Calu3 (cell line): ENCODE measurements at regions of chr1 and their contacts with region 1.

Region 1: GRCh38 chr1:76154206-76154956 is 79.8 kb downstream of the ST6GALNAC3 start:
- DNase-seq: peak; percentile 81
- H3K4me3 Mint-ChIP-seq: peak overlapping the region; percentile 72
- H3K27ac Mint-ChIP-seq: peak overlapping the region; percentile 57
- H3K4me1 Mint-ChIP-seq: peaks cover 10% of the 10 kb centered on the region
- H3K27me3 Mint-ChIP-seq: no peaks in the 10 kb centered on the region
- CTCF ChIP-seq: peak; percentile 90

Region 2: GRCh38 chr1:75991497-75992114 is 162.8 kb before region 1 on chr1:
- CTCF ChIA-PET with region 1: no interaction called
- intact Hi-C with region 1: loop called (anchors 5 kb)
- DNase-seq: peak; percentile 89
- H3K4me3 Mint-ChIP-seq: no peak overlapping the region
- H3K27ac Mint-ChIP-seq: no peak overlapping the region
- H3K4me1 Mint-ChIP-seq: no peaks in the 10 kb centered on the region
- H3K27me3 Mint-ChIP-seq: peaks cover 12% of the 10 kb centered on the region
- CTCF ChIP-seq: peak; percentile 57

Region 3: GRCh38 chr1:76330991-76331603 is 176.7 kb after region 1 on chr1:
- CTCF ChIA-PET with region 1: interaction called, 3 read pairs
- intact Hi-C with region 1: loop called (anchors 1 kb)
- DNase-seq: peak; percentile 32
- H3K4me3 Mint-ChIP-seq: no peak overlapping the region
- H3K27ac Mint-ChIP-seq: no peak overlapping the region
- H3K4me1 Mint-ChIP-seq: no peaks in the 10 kb centered on the region
- H3K27me3 Mint-ChIP-seq: no peaks in the 10 kb centered on the region
- CTCF ChIP-seq: peak; percentile 70

Region 4: DNA sequence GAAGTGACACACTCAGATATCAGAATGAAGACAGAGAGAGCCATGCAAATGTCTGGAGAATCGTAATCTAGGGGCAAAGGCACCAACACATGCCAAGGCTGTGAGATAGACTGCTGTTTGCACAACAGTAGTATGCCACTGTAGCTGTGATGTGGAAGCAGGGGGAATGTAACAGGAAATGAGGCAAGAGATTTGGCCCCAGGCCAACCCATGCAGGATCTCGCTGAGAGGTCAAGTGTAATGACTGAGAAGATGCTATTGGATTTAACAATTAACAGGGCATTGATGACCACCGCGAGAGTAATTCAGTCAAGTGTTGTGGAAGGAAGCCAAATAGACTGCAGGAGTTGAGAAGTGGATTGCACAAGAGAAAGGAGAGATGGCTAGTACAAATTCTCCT is 605.6 kb after region 1 on chr1:
- CTCF ChIA-PET with region 1: no interaction called
- intact Hi-C with region 1: loop called (anchors 10 kb)
- DNase-seq: peak; percentile 33
- H3K4me3 Mint-ChIP-seq: no peak overlapping the region
- H3K27ac Mint-ChIP-seq: no peak overlapping the region
- H3K4me1 Mint-ChIP-seq: no peaks in the 10 kb centered on the region
- H3K27me3 Mint-ChIP-seq: peaks cover 2% of the 10 kb centered on the region
- CTCF ChIP-seq: no peak

Region 5: DNA sequence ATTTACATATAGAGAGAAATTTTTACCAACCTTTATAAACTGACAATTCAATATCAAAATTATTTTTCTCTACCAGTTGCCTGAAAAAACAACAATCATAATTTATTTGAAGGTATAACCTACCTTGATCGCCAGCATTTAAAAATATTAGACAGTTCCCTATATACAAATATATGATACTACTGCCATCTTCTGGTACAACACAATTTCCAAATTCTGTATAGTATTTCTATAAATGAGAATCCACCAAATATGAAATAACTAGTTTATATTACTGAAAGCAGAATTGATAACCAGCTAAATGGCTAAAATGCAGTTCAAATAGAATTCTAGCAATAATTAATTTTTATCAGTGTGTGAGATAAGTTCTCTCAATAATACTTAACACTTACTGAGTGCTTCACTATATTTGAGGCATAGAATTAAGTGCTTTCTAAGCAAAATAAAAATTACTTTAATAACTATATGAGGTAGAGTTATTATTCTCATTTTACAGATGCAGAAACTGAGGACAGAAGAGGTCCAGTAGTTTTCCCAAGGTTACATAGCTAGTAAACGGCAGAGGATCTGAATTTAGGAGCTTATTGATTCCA is 989.2 kb after region 1 on chr1:
- CTCF ChIA-PET with region 1: interaction called, 4 read pairs
- intact Hi-C with region 1: loop called (anchors 1 kb)
- DNase-seq: no peak
- H3K4me3 Mint-ChIP-seq: no peak overlapping the region
- H3K27ac Mint-ChIP-seq: no peak overlapping the region
- H3K4me1 Mint-ChIP-seq: no peaks in the 10 kb centered on the region
- H3K27me3 Mint-ChIP-seq: no peaks in the 10 kb centered on the region
- CTCF ChIP-seq: peak; percentile 44